ENCODE measurements at regions of chr5 and their contacts with region 1.

Region 1: GRCh38 chr5:140322751-140323731 is 20.1 kb upstream of the PFDN1 start:
- DNase-seq: peak in 1 of 2 donors; percentile 80
- H3K4me3 ChIP-seq: peak overlapping the region in 1 of 2 donors; percentile 16
- H3K27ac ChIP-seq: peak overlapping the region; percentile 81 to 85
- H3K4me1 ChIP-seq: peaks cover 12 to 26% of the 10 kb centered on the region in 2 donors
- H3K27me3 ChIP-seq: no peaks in the 10 kb centered on the region
- CTCF ChIP-seq: no peak

Region 2: GRCh38 chr5:140295414-140295813 is 27.6 kb before region 1 on chr5:
- intact Hi-C with region 1: loop called (anchors 2 kb)
- DNase-seq: peak in 1 of 2 donors; percentile 84
- H3K4me3 ChIP-seq: no peak overlapping the region
- H3K27ac ChIP-seq: peak overlapping the region; percentile 52 to 74
- H3K4me1 ChIP-seq: peaks cover 0 to 48% of the 10 kb centered on the region in 2 donors
- H3K27me3 ChIP-seq: no peaks in the 10 kb centered on the region
- CTCF ChIP-seq: no peak

Region 3: DNA sequence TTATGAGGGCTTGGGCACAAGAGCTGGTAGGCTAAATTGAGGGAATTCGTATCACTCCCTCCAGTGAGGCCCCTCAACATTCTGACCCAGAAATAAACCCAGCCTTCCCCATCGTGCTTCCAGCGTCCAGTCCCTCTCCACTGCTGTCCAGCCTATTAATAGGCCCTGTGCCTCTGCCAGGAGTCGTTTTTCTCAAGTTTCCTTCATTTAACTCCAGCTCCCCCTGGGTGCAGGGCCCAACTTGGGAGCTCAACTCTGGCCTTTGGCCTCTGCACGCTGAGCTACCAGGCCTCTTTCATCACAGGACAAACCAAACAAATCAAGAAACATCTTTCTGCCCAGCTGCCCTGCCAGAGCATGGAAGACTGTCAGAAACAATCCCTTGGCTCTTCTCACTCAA is 13.3 kb after region 1 on chr5:
- intact Hi-C with region 1: loop called (anchors 2 kb)
- DNase-seq: peak in 1 of 2 donors; percentile 70
- H3K4me3 ChIP-seq: no peak overlapping the region
- H3K27ac ChIP-seq: peak overlapping the region; percentile 74 to 75
- H3K4me1 ChIP-seq: peaks cover 5 to 28% of the 10 kb centered on the region in 2 donors
- H3K27me3 ChIP-seq: no peaks in the 10 kb centered on the region
- CTCF ChIP-seq: peak in 1 of 3 experiments; percentile 9

Measured in ascending aorta (tissue), 2 donors.